K562 (cell line): ENCODE measurements at regions of chr3 and their contacts with region 1.

Region 1: DNA sequence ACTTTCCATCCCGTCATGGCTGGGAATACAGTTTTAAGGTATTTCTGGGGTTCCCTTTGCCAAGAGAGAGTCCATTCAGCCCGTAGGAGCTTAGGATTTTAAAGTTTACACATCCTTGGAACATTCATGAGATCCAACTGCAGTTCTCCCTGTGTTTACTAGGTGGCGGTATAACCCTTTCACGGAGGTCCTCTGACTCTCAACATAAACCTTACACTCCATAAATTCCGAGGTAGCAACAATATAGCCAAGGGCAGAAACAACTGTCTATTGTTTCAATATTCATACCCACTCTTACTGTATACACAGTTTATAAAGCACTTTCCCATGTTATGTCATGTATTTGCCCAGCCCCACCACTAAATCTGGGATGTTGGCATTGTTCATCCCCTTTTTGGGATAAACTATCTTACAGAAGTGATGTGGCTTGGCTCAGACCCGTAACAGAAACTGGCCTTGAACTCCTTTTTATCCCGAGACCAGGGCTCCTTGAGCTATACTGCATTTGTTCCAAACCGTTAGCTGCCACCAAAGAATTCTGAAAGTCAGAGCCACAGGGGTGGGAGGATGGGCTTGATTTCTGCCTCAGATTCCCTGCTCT is 69.2 kb upstream of the COL6A5 start:
- DNase-seq: peak; percentile 55 to 70 (median 60)
- ATAC-seq: peak; percentile 92
- H3K4me3 ChIP-seq: no peak overlapping the region
- H3K27ac ChIP-seq: no peak overlapping the region
- H3K4me1 ChIP-seq: peaks cover 0 to 5% of the 10 kb centered on the region in 2 experiments; a peak in 3 of 5 replicates
- H3K27me3 ChIP-seq: no peaks in the 10 kb centered on the region
- CTCF ChIP-seq: peak; percentile 73 to 85 (median 81)
- EP300 ChIP-seq: no peak; the same call in 1 of the 2 replicates
- POLR2A ChIP-seq: no peak
- RAD21 ChIP-seq: peak; percentile 92 to 94

Region 2: GRCh38 chr3:130073582-130073981 is 202.7 kb before region 1 on chr3:
- CTCF ChIA-PET with region 1: no interaction called
- POLR2A ChIA-PET with region 1: no interaction called
- in situ Hi-C with region 1: no loop called
- intact Hi-C with region 1: no loop called
- DNase-seq: no peak
- ATAC-seq: no peak
- H3K4me3 ChIP-seq: no peak overlapping the region
- H3K27ac ChIP-seq: no peak overlapping the region
- H3K4me1 ChIP-seq: no peaks in the 10 kb centered on the region
- H3K27me3 ChIP-seq: peaks cover 0 to 5% of the 10 kb centered on the region in 2 experiments; a peak in 2 of 5 replicates
- CTCF ChIP-seq: no peak
- EP300 ChIP-seq: no peak
- POLR2A ChIP-seq: no peak
- RAD21 ChIP-seq: no peak

Region 3: DNA sequence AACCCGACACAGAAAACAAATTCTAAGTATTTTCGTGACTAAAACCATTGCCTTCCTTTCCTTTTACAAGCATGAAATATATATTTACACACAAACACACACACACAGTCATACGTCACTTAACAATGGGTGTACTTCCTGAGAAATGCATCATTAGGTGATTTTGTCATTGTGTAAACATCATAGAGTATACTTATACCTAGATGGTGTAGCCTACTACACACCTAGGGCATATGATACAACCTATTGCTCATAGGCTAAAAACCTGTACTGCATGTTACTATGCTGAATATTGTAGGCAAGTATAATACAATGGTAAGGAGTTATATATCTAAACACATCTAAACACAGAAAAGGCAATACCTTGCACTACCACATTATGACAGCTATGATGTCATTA is 97.7 kb after region 1 on chr3:
- CTCF ChIA-PET with region 1: no interaction called
- POLR2A ChIA-PET with region 1: no interaction called
- in situ Hi-C with region 1: no loop called
- intact Hi-C with region 1: loop called (anchors 2 kb)
- DNase-seq: no peak
- ATAC-seq: no peak; the same call in 1 of the 3 replicates
- H3K4me3 ChIP-seq: no peak overlapping the region
- H3K27ac ChIP-seq: no peak overlapping the region; the same call in 2 of the 3 replicates
- H3K4me1 ChIP-seq: peaks cover 12 to 30% of the 10 kb centered on the region in 2 experiments
- H3K27me3 ChIP-seq: no peaks in the 10 kb centered on the region
- CTCF ChIP-seq: no peak
- EP300 ChIP-seq: no peak
- POLR2A ChIP-seq: no peak
- RAD21 ChIP-seq: no peak

Region 4: DNA sequence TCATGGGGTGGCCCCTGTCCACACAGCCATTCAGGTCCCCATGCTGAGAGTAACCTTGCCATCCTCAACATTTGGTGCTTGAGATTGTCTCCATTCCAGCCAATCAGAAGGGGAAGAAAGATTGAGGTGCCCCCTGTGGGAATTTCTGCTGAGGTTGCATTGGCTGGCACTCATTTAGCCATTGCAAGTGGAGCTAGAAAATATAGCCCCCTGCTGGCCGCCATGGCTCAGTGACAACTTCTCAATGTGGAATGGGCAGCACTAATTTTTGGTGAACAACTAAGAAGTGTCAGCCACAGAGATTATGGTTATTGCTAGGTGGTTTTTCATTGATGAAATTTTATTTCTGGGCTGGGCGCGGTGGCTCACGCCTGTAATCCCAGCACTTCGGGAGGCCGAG is 262.7 kb after region 1 on chr3:
- CTCF ChIA-PET with region 1: interaction called, 9 read pairs
- POLR2A ChIA-PET with region 1: no interaction called
- in situ Hi-C with region 1: no loop called
- intact Hi-C with region 1: loop called (anchors 1 kb)
- DNase-seq: peak; percentile 20 to 71 (median 38)
- ATAC-seq: peak; percentile 92
- H3K4me3 ChIP-seq: no peak overlapping the region
- H3K27ac ChIP-seq: no peak overlapping the region
- H3K4me1 ChIP-seq: no peaks in the 10 kb centered on the region; a peak in 1 of 5 replicates
- H3K27me3 ChIP-seq: no peaks in the 10 kb centered on the region
- CTCF ChIP-seq: peak; percentile 73 to 83 (median 79)
- EP300 ChIP-seq: no peak
- POLR2A ChIP-seq: no peak
- RAD21 ChIP-seq: peak; percentile 66 to 84